ENCODE measurements at regions of chr10 and their contacts with region 1.

Region 1: GRCh38 chr10:102583435-102584417 is 60.6 kb upstream of the TRIM8 start:
- DNase-seq: peak; percentile 86
- ATAC-seq: peak; percentile 97
- H3K4me3 ChIP-seq: no peak overlapping the region
- H3K27ac ChIP-seq: no peak overlapping the region
- H3K4me1 ChIP-seq: no peaks in the 10 kb centered on the region
- H3K27me3 ChIP-seq: no peaks in the 10 kb centered on the region
- CTCF ChIP-seq: peak; percentile 74

Region 2: GRCh38 chr10:102503281-102504220 is 80.2 kb before region 1 on chr10 and contains the start of gene SUFU:
- CTCF ChIA-PET with region 1: interaction called, 31 read pairs
- POLR2A ChIA-PET with region 1: no interaction called
- intact Hi-C with region 1: loop called (anchors 1 kb)
- DNase-seq: peak; percentile 97
- ATAC-seq: peak; percentile 61
- H3K4me3 ChIP-seq: peak within 1 kb of the TSS; percentile 92
- H3K27ac ChIP-seq: no peak within 1 kb of the TSS
- H3K4me1 ChIP-seq: peaks cover 22% of the 10 kb centered on the region
- H3K27me3 ChIP-seq: no peaks in the 10 kb centered on the region
- CTCF ChIP-seq: peak; percentile 72
- total RNA-seq, gene SUFU: 2.7 and 4.4 TPM in 2 replicates

Region 3: DNA sequence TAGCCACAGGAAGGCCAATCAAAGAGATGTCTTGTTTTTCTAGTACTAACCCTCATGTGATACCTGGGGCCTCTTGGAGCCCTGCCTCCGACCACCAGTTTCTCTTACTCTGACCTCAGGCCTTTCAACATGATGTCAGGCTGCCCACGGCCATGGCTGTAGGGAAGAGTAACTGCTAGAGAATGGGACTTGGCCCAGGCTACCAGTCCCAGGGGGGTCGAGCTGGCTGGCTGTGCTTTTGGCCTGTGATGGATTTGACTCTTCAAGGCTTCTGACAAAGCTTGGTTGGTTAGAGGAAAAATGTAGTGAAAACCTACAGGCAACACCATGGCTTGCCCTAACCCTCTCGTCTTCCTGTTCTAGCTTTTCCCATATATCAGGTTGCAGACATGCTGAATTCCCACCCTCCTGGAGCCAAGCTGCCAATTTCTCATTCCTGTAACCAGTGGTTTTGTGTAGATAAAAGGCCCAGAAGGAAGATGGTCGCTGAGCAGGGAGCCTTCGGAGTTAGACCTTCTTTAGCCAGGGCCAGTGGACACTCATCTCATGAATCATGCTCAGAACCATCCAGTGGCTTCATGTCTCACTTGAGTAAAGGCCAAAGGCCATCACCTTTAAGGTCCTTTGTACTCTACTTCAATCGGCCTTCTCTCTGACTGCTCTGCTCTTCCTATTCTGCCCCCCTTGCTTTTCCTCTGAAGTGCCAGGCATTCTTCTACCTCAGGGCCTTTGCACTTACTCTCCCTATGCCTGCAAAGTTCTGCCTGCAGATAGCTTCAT is 60.3 kb before region 1 on chr10:
- CTCF ChIA-PET with region 1: no interaction called
- POLR2A ChIA-PET with region 1: no interaction called
- intact Hi-C with region 1: no loop called
- DNase-seq: no peak
- ATAC-seq: no peak
- H3K4me3 ChIP-seq: no peak overlapping the region
- H3K27ac ChIP-seq: no peak overlapping the region
- H3K4me1 ChIP-seq: no peaks in the 10 kb centered on the region
- H3K27me3 ChIP-seq: no peaks in the 10 kb centered on the region
- CTCF ChIP-seq: no peak

Region 4: DNA sequence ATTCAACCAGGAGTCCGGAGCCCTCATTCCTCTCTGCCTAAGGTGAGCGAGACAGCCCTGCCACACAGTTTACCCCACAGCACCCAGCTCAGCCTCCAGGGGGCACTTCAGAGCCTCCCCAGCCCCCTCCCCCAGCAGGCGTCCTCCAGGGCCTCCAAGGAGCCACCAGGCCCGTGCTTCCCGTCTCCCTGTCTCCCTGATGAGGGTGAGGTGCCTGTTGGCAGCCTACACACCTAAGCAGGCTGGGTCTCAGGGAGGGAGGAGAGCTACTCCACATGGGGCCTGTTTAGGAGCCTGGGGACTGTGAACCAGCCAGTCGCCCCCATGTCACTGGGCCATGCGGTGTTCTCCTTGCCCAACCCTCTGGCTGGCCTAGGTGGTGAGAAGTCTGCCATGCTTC is 31.6 kb after region 1 on chr10:
- CTCF ChIA-PET with region 1: no interaction called
- POLR2A ChIA-PET with region 1: no interaction called
- intact Hi-C with region 1: no loop called
- DNase-seq: no peak
- ATAC-seq: no peak
- H3K4me3 ChIP-seq: no peak overlapping the region
- H3K27ac ChIP-seq: no peak overlapping the region
- H3K4me1 ChIP-seq: peaks cover 20% of the 10 kb centered on the region
- H3K27me3 ChIP-seq: no peaks in the 10 kb centered on the region
- CTCF ChIP-seq: peak; percentile 39